Activated CD4-positive, alpha-beta T cell treated with anti-CD3 and anti-CD28 coated beads, Interleukin-2, amount 10 ng/mL, durations not matched to agents 24 days and 14 days (primary cell): ENCODE measurements at regions of chr14 and their contacts with region 1.

Region 1: DNA sequence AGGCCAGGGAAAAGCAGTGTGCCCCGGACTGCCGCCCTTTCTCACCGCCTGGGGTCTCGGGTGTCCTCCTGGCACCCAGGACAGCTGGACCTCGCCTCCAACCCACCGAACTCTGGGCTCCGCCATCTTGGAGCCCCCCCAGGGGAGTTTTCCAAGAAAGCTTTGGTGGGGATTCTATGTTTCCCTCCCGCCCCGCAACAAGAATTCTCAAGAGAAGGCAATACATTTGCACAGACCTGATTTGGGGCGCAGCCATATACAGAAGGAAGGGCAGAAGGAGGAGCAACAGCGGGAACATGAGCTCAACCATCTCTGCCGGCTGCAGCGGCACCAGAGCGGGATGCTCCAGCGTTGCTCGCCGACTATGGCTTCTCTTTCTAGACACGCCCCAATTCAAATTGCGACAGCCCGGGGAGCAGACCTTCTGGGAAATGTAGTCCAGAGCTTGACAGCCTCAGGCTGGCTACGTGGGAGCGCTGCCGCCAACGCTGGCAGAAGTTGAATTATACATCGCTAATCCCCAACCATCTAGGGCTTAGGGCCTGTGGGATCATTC is at the start of gene RDH11:
- DNase-seq: peak; percentile 95
- H3K4me3 Mint-ChIP-seq: peak within 1 kb of the TSS; percentile 89
- H3K27ac Mint-ChIP-seq: peak within 1 kb of the TSS; percentile 97
- H3K4me1 Mint-ChIP-seq: peaks cover 28% of the 10 kb centered on the region
- H3K27me3 Mint-ChIP-seq: no peaks in the 10 kb centered on the region
- total RNA-seq, gene RDH11: 66.2 and 67.7 TPM in 2 replicates

Region 2: DNA sequence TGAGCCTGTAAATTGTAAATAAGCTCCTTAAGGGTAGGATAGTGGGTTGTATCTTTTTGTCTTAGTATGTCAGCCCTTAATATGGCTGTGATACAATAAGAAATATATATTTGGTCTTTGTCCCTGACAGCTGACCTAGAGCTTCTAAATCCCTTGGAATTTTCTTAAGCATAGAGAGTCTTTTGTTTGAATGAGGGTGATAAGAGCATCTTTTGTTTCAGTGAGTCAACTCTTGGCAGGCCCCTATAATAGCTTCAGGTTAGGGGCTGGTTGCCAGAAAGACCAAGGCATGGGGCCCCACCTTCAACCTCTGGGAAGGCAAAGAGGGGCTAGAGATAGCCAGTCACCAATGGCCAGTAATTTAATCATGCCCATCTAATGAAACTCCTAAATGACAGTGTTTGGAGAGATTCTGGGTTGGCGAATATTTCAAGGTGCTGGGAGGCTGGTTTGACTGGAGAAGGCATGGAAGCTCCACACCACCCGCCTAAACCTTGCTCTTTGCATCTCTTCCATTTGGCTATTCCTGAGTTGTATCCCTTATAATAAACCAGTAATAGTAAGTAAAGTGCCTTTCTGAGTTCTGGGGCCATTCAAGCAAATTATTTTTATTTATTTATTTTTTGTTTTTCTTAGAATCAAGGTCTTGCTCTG is 443.8 kb before region 1 on chr14:
- intact Hi-C with region 1: no loop called
- DNase-seq: no peak
- H3K4me3 Mint-ChIP-seq: no peak overlapping the region
- H3K27ac Mint-ChIP-seq: no peak overlapping the region
- H3K4me1 Mint-ChIP-seq: peaks cover 1% of the 10 kb centered on the region
- H3K27me3 Mint-ChIP-seq: no peaks in the 10 kb centered on the region

Region 3: DNA sequence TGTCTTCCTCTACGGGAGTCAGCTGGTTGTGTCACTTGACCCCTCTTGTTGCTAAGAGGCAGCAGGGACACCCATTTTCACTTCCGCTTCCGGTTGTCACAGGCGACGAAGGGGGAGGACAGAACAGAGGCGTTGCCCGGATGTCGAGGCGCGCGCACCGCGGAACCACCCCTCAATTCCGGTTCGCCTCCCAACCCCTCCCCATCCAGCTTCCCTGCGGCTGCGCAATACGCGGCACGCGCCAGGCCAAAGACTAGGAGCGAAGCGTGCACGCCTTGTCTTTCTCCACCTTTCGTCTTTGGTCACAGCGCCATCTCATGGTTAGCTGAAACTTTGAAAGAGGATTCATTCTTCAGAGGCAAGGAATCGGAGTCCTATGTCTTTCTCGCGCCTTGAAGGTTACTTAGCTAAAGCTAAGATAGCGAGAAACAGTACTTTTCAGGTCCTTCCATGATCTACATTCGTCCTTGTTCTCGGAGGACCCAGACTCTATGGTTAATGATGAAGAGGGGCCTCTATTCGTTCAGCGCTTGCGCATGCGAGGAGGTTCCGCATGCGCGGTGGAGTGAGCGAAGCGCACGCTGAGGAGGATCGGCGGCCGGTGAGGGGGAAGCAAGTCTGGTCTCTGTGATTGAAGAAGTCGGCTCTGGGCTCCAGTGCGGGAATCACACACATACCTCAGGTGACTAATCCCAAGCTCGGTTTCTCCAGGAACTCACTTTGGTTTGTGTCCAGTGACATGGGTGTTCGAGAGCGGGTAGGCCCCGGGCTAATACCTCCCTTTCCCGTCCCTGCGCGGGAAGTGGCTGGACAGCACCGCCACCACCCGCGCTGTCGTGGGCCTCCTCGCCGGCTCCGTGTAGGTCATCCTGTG is 335.5 kb before region 1 on chr14 and contains the starts of genes ATP6V1D and EIF2S1:
- intact Hi-C with region 1: loop called (anchors 5 kb)
- DNase-seq: peak; percentile 100
- H3K4me3 Mint-ChIP-seq: peak within 1 kb of the TSS; percentile 94
- H3K27ac Mint-ChIP-seq: peak within 1 kb of the TSS; percentile 99
- H3K4me1 Mint-ChIP-seq: peaks cover 44% of the 10 kb centered on the region
- H3K27me3 Mint-ChIP-seq: peaks cover 4% of the 10 kb centered on the region
- total RNA-seq, gene ATP6V1D: 29.7 and 30.1 TPM in 2 replicates
- total RNA-seq, gene EIF2S1: 255 and 268 TPM in 2 replicates

Region 4: GRCh38 chr14:67619446-67620216 is 75.8 kb before region 1 on chr14 and contains the start of gene ARG2:
- intact Hi-C with region 1: loop called (anchors 1 kb)
- DNase-seq: peak; percentile 99
- H3K4me3 Mint-ChIP-seq: peak within 1 kb of the TSS; percentile 92
- H3K27ac Mint-ChIP-seq: peak within 1 kb of the TSS; percentile 85
- H3K4me1 Mint-ChIP-seq: peaks cover 33% of the 10 kb centered on the region
- H3K27me3 Mint-ChIP-seq: peaks cover 15% of the 10 kb centered on the region
- total RNA-seq, gene ARG2: 4.7 and 5.0 TPM in 2 replicates

Region 5: GRCh38 chr14:67680121-67680602 is 15.3 kb before region 1 on chr14:
- intact Hi-C with region 1: loop called (anchors 1 kb)
- DNase-seq: peak; percentile 78
- H3K4me3 Mint-ChIP-seq: no peak overlapping the region
- H3K27ac Mint-ChIP-seq: peak overlapping the region; percentile 62
- H3K4me1 Mint-ChIP-seq: peaks cover 41% of the 10 kb centered on the region
- H3K27me3 Mint-ChIP-seq: no peaks in the 10 kb centered on the region

Region 6: DNA sequence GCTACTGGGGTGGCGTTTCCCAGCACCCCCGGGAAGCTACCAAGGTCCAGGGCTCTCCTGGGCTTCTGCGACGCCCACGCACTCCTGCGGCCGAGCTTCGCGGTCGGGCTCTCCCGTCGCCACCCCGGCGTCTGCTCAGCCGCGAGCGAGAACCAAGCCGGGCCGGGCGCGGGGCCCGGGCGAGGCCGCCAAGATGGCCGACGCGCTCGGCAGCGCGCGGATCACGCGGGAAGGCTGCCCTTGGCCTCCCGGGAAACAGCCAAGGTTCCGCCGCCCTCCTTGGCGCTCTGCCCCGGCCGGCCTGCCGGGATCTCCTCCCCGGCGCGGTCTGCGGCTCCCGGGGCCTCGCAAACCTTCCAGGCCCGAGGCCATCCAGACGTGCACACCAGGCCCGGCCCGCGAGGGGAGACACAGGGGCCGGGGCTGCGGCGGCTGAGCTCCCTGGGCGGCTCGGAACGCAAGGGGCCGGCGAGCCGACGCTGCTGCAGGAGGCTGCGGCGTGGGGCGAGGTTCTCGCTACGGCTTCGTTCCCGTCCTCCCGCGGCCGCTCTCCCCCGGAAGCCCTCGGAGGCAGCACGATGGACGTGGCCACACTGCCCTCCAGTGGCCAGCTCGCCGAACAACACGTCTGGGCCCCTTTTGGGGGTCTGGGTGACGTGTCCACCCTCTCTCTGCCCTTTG is 1120.9 kb after region 1 on chr14:
- intact Hi-C with region 1: loop called (anchors 10 kb)
- DNase-seq: peak; percentile 97
- H3K4me3 Mint-ChIP-seq: peak overlapping the region; percentile 79
- H3K27ac Mint-ChIP-seq: peak overlapping the region; percentile 90
- H3K4me1 Mint-ChIP-seq: peaks cover 56% of the 10 kb centered on the region
- H3K27me3 Mint-ChIP-seq: no peaks in the 10 kb centered on the region